ENCODE measurements at regions of chr6 and their contacts with region 1.

Region 1: DNA sequence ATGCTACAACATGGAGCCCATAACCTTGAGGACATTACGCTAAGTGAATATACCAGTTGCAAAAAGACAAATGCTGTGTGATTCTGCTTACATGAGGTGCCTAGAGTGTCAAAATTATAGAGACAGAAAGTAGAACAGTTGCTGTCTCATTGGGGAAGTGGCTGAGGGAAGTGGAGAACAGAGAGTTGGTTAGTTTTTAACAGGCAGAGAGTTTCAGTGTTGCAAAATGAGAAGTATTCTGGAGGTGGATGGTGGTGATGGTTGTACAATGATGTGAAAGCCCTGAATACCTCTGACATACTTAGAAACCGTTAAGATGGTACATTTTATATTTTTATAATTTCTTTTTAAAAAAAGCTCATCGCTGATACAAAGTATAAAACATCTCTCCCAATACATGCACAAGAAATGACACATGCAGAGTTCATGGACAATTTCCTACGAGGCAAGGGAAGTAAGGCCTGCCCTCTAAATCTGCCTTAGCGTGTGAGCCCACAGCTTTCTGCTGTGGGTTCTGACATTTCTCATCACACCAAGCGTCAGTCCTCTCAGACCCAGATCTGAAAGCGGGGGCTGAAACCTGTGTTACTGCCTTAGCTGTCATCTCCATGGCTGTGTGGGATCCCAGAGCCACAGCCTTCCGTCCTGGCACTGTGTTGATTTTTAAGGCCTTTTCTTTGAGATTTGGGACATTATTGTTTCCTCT is 126.0 kb downstream of the RNASET2 start:
- DNase-seq: peak; percentile 68
- H3K4me3 Mint-ChIP-seq: no peak overlapping the region
- H3K27ac Mint-ChIP-seq: peak overlapping the region; percentile 58
- H3K4me1 Mint-ChIP-seq: peaks cover 17% of the 10 kb centered on the region
- H3K27me3 Mint-ChIP-seq: no peaks in the 10 kb centered on the region

Region 2: GRCh38 chr6:166419286-166419685 is 411.1 kb before region 1 on chr6:
- CTCF ChIA-PET with region 1: no interaction called
- POLR2A ChIA-PET with region 1: no interaction called
- intact Hi-C with region 1: loop called (anchors 5 kb)
- DNase-seq: peak; percentile 82
- H3K4me3 Mint-ChIP-seq: peak overlapping the region; percentile 4
- H3K27ac Mint-ChIP-seq: peak overlapping the region; percentile 73
- H3K4me1 Mint-ChIP-seq: peaks cover 62% of the 10 kb centered on the region
- H3K27me3 Mint-ChIP-seq: no peaks in the 10 kb centered on the region

Region 3: GRCh38 chr6:166862287-166862977 is 32.1 kb after region 1 on chr6:
- CTCF ChIA-PET with region 1: no interaction called
- POLR2A ChIA-PET with region 1: no interaction called
- intact Hi-C with region 1: loop called (anchors 2 kb)
- DNase-seq: peak; percentile 53
- H3K4me3 Mint-ChIP-seq: peak overlapping the region; percentile 75
- H3K27ac Mint-ChIP-seq: no peak overlapping the region
- H3K4me1 Mint-ChIP-seq: peaks cover 6% of the 10 kb centered on the region
- H3K27me3 Mint-ChIP-seq: peaks cover 2% of the 10 kb centered on the region

Region 4: GRCh38 chr6:166942393-166943168 is 112.2 kb after region 1 on chr6:
- CTCF ChIA-PET with region 1: no interaction called
- POLR2A ChIA-PET with region 1: no interaction called
- intact Hi-C with region 1: loop called (anchors 2 kb)
- DNase-seq: peak; percentile 91
- H3K4me3 Mint-ChIP-seq: peak overlapping the region; percentile 49
- H3K27ac Mint-ChIP-seq: peak overlapping the region; percentile 95
- H3K4me1 Mint-ChIP-seq: peaks cover 45% of the 10 kb centered on the region
- H3K27me3 Mint-ChIP-seq: no peaks in the 10 kb centered on the region

Region 5: DNA sequence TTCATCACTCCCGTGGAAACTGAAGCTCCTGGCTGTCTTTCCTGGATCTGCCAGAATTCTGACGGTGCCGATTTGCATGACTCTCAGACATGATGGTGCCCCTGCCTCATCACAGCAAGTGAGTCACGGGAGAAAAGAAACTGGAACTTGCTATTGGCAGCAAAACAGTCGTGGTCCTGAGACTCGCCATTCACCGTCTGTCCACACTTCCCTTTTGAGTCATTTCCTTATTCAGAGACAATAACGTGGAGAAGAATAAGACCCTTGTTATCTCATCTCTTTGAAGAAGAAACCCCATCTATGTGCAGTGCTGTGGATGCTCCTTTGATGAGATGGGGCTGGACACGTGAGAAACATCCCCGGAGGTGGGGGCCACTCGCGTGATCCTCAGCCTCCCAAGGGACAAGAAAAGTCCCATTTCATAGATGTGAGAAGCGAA is 323.2 kb after region 1 on chr6:
- CTCF ChIA-PET with region 1: no interaction called
- POLR2A ChIA-PET with region 1: no interaction called
- intact Hi-C with region 1: loop called (anchors 5 kb)
- DNase-seq: peak; percentile 43
- H3K4me3 Mint-ChIP-seq: peak overlapping the region; percentile 8
- H3K27ac Mint-ChIP-seq: no peak overlapping the region
- H3K4me1 Mint-ChIP-seq: peaks cover 24% of the 10 kb centered on the region
- H3K27me3 Mint-ChIP-seq: peaks cover 2% of the 10 kb centered on the region

Measured in activated CD4-positive, alpha-beta memory T cell treated with anti-CD3 and anti-CD28 coated beads for 36 hours (primary cell).